ENCODE measurements at regions of chr9 and their contacts with region 1.

Region 1: DNA sequence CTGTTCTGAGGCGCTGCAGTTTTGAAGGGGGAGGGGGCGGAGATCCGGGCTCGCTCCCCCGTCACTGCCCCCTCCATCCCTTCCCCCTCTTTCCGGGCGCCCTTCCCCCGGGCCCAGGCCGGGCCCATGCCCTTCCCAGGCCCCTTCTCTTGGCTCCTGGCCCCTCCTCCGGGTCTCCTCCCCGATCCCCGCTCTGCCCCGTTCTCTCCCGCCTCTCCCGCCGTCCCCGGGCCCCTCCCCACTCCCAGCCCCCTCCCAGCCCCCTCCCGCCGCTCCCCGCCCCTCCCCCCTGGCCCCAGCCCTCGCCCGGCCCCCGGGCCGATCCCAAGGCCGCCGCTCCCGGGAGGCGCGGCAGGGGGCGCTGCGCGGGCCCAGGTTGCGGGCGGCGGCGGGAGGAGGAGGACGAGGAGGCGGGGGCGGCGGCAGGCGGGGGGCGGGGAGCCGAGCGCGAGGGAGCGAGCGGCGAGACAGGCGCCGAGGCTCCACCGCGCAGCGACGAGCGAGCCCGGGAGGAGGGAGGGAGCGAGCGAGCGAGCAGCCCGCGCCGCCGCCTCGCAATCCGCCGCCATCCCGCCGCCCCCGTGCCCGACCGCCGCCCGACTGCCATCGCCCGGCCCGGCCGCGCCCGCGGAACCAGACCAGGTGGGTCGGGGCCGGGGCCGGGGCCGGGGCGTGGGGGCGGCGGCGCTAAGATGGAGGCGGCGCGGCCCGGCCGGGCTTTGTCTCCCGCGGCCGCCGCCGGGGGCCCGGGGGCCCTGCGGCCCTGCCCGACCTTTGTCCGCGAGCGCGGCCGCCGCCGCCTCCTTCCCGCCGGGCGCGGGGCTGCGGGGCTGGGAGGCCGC is at the start of gene PRRC2B:
- H3K4me3 ChIP-seq: peak within 1 kb of the TSS; percentile 68
- H3K27ac ChIP-seq: peak within 1 kb of the TSS; percentile 99
- H3K4me1 ChIP-seq: peaks cover 17% of the 10 kb centered on the region
- CTCF ChIP-seq: no peak

Region 2: GRCh38 chr9:131382850-131383729 is 10.8 kb before region 1 on chr9:
- CTCF ChIA-PET with region 1: interaction called, 19 read pairs
- POLR2A ChIA-PET with region 1: interaction called, 16 read pairs
- H3K4me3 ChIP-seq: no peak overlapping the region
- H3K27ac ChIP-seq: peak overlapping the region; percentile 44; the same call in 1 of the 2 replicates
- H3K4me1 ChIP-seq: peaks cover 3% of the 10 kb centered on the region; the same call in 1 of the 2 replicates
- CTCF ChIP-seq: no peak

Region 3: DNA sequence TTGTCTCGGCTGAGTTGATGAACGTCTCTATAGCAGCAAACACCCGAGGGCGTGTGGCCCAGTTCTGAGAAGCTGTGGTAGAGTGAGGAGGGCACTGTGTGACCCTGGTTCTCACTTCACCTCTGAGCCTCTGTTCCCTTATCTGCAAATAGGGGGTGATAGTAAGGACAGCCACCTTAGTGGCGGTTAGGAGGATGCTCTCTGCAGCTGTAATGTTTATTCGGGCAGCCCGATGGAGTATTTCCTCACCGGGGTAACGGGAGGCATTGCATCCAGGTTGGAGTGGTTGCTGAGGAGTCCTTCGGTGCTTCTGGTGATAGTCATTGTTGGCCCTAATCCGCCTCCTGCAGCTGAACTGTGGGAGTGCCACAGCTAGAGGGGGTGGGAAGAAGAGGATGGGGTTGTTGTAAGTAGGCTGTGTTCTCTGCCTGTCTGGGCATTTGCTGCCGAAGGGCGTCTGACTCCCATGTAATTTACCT is 13.9 kb after region 1 on chr9:
- CTCF ChIA-PET with region 1: interaction called, 9 read pairs
- POLR2A ChIA-PET with region 1: interaction called, 13 read pairs
- H3K4me3 ChIP-seq: no peak overlapping the region
- H3K27ac ChIP-seq: peak overlapping the region; percentile 47
- H3K4me1 ChIP-seq: peaks cover 66% of the 10 kb centered on the region
- CTCF ChIP-seq: peak; percentile 62; the same call in 1 of the 2 replicates